ENCODE measurements at regions of chr6 and their contacts with region 1.

Region 1: DNA sequence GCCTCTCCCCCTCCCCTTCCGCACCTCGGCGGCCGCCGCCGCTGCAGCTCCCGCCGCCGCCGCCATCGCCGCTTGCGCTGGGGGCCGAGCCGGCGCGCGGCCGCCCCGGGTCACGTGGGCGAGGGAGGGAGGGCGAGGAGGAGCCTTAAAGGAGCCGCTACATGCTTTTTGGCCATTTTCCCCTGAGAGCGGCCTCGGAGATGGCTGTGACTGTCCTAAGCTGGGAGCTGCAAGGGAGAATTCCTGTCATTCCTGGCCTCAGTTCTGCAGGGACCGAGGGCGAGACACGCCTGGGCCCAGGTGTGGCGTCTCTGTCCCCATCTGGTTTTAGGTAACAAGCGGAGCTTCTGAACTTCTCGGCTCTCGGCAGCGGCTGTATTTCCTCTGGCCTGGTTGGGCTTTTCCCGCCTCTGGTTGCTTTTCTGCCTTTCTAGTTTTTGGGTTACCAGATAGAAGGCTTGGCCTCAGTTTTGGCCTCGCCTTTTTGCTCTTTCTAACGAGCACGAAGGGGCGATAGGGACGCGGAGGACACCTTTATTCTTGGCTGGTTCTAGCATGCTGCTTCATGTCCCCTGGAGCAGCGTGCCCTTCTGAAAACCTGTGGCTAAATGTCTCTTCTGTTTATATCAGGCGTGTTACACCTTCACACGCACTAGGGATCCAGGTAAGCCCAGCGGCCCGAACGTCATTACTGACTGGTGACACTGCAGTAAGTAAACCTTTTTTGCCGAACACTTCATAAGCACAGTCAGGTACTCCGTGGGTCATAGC is at the start of gene EHMT2:
- DNase-seq: peak; percentile 82 to 91
- ATAC-seq: peak; percentile 59 to 83 (median 74)
- H3K4me3 ChIP-seq: peak within 1 kb of the TSS; percentile 76
- H3K4me3 Mint-ChIP-seq: peak within 1 kb of the TSS; percentile 97
- H3K27ac ChIP-seq: peak within 1 kb of the TSS; percentile 81
- H3K27ac Mint-ChIP-seq: peak within 1 kb of the TSS; percentile 95
- H3K4me1 ChIP-seq: peaks cover 52% of the 10 kb centered on the region
- H3K4me1 Mint-ChIP-seq: peaks cover 28 to 52% of the 10 kb centered on the region in 2 donors
- H3K27me3 ChIP-seq: no peaks in the 10 kb centered on the region
- H3K27me3 Mint-ChIP-seq: no peaks in the 10 kb centered on the region
- CTCF ChIP-seq: no peak
- total RNA-seq, gene EHMT2: 49.3 to 56.6 (median 55.8) TPM

Region 2: GRCh38 chr6:31862344-31863227 is 35.2 kb before region 1 on chr6 and contains the start of gene NEU1:
- intact Hi-C with region 1: loop called (anchors 1 kb)
- DNase-seq: peak; percentile 99 to 100
- ATAC-seq: peak; percentile 86 to 98 (median 93)
- H3K4me3 ChIP-seq: peak within 1 kb of the TSS; percentile 89
- H3K4me3 Mint-ChIP-seq: peak within 1 kb of the TSS; percentile 96
- H3K27ac ChIP-seq: peak within 1 kb of the TSS; percentile 91
- H3K27ac Mint-ChIP-seq: peak within 1 kb of the TSS; percentile 97 to 99
- H3K4me1 ChIP-seq: peaks cover 25% of the 10 kb centered on the region
- H3K4me1 Mint-ChIP-seq: peaks cover 20 to 33% of the 10 kb centered on the region in 2 donors
- H3K27me3 ChIP-seq: no peaks in the 10 kb centered on the region
- H3K27me3 Mint-ChIP-seq: no peaks in the 10 kb centered on the region
- CTCF ChIP-seq: no peak
- total RNA-seq, gene NEU1: 36.1 to 69.6 (median 51.5) TPM